ENCODE measurements at regions of chrX and their contacts with region 1.

Region 1: DNA sequence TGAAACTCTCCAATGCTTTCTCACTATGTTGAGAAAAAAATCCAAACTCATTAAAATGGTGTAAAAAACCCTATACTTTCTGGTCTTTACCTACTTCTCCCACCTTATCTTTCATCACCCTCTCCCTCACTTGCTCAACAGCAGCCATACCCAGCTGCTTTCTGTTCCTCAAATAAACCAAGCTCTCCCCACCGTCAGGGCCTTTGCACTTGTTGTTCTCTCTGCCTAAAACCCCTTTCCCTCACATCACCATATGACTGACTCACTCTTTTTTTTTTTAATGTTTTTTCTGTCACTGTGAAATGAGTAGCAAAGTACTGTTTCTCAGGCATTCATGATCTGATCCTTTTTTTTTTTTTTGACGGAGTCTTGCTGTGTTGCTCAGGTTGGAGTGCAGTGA is 122.3 kb upstream of the TMEM164 start:
- H3K4me3 ChIP-seq: no peak overlapping the region
- H3K27ac ChIP-seq: no peak overlapping the region
- H3K4me1 ChIP-seq: no peaks in the 10 kb centered on the region
- CTCF ChIP-seq: no peak

Region 2: GRCh38 chrX:109714340-109714958 is 166.2 kb before region 1 on chrX:
- CTCF ChIA-PET with region 1: interaction called, 18 read pairs
- POLR2A ChIA-PET with region 1: no interaction called
- H3K4me3 ChIP-seq: no peak overlapping the region
- H3K27ac ChIP-seq: no peak overlapping the region
- H3K4me1 ChIP-seq: peaks cover 3% of the 10 kb centered on the region; the same call in 1 of the 2 replicates
- CTCF ChIP-seq: no peak

Region 3: GRCh38 chrX:109863811-109864210 is 16.8 kb before region 1 on chrX:
- CTCF ChIA-PET with region 1: no interaction called
- POLR2A ChIA-PET with region 1: no interaction called
- H3K4me3 ChIP-seq: no peak overlapping the region
- H3K27ac ChIP-seq: no peak overlapping the region
- H3K4me1 ChIP-seq: no peaks in the 10 kb centered on the region
- CTCF ChIP-seq: no peak